ENCODE measurements at regions of chr15 and their contacts with region 1.

Region 1: DNA sequence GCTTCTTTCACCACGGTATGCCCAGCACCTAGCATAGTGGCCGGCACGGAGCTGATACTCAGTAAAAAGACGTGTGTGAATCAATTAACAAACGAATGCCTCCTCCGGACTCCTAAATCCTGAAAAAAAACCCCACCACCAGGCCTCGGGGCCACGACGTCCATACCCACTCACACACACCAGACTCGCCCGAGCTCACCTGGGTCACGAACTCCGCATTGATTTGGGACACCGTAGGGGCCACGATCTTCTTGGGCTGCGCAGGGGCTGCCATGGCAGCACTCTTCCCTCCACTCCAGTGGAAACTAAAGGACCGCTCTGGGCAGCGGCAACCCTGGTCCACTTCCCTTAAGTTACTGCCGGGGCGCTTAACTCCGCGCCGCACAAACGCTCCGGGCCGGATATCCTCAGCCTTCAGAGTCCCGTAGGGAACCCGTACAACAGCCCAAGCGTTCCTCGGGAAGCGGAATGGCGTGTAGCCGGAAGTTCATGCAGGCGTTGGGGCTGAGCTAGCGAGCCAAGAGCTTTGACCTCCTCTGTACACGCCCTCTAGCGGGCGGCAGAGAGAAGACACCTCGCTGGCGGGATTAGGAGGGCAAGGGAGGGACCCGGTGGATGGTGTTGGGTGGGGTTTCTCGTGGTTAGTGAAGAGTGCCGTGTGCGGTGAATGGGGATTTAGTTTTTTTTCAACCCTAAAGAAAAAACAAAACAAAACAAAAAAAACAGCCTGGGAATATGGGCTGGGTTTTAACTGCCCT is at the start of gene AQR:
- DNase-seq: peak; percentile 83 to 96
- ATAC-seq: peak; percentile 97 to 99 (median 97)
- H3K4me3 ChIP-seq: peak within 1 kb of the TSS; percentile 85
- H3K4me3 Mint-ChIP-seq: peak within 1 kb of the TSS; percentile 100
- H3K27ac ChIP-seq: peak within 1 kb of the TSS; percentile 66
- H3K27ac Mint-ChIP-seq: peak within 1 kb of the TSS; percentile 95 to 97
- H3K4me1 ChIP-seq: peaks cover 19% of the 10 kb centered on the region
- H3K4me1 Mint-ChIP-seq: peaks cover 47 to 49% of the 10 kb centered on the region in 2 donors
- H3K27me3 ChIP-seq: no peaks in the 10 kb centered on the region
- H3K27me3 Mint-ChIP-seq: no peaks in the 10 kb centered on the region
- CTCF ChIP-seq: peak; percentile 99
- total RNA-seq, gene AQR: 44.8 to 64.4 (median 53.0) TPM

Region 2: GRCh38 chr15:34795267-34796081 is 174.0 kb before region 1 on chr15 and contains the start of gene ACTC1:
- intact Hi-C with region 1: no loop called
- DNase-seq: no peak
- ATAC-seq: no peak
- H3K4me3 ChIP-seq: no peak within 1 kb of the TSS
- H3K4me3 Mint-ChIP-seq: no peak within 1 kb of the TSS
- H3K27ac ChIP-seq: no peak within 1 kb of the TSS
- H3K27ac Mint-ChIP-seq: no peak within 1 kb of the TSS
- H3K4me1 ChIP-seq: no peaks in the 10 kb centered on the region
- H3K4me1 Mint-ChIP-seq: no peaks in the 10 kb centered on the region
- H3K27me3 ChIP-seq: peaks cover 12% of the 10 kb centered on the region
- H3K27me3 Mint-ChIP-seq: peaks cover 38 to 82% of the 10 kb centered on the region in 2 donors
- CTCF ChIP-seq: no peak
- total RNA-seq, gene ACTC1: not detected

Region 3: DNA sequence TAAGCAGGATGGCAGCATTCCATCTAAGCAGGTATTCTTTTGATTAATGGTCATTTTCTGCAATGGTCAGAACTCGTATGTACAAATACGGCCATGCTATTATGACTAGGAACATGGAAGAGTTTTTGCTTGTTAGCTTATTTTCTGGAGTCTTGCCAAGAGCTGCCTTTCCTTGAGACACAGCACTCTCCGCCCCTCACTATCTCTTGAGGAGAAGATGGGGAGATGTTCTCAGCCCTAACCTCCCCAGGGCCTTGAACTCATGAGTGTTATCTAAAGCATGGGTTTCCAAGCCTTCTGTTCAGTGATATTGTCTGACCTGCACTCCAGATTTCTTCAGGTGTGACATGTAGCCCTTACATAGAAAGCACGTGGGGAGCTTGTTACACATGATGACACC is 108.3 kb before region 1 on chr15:
- intact Hi-C with region 1: no loop called
- DNase-seq: no peak
- ATAC-seq: no peak
- H3K4me3 ChIP-seq: no peak overlapping the region
- H3K4me3 Mint-ChIP-seq: no peak overlapping the region
- H3K27ac ChIP-seq: no peak overlapping the region
- H3K27ac Mint-ChIP-seq: no peak overlapping the region
- H3K4me1 ChIP-seq: no peaks in the 10 kb centered on the region
- H3K4me1 Mint-ChIP-seq: no peaks in the 10 kb centered on the region
- H3K27me3 ChIP-seq: no peaks in the 10 kb centered on the region
- H3K27me3 Mint-ChIP-seq: no peaks in the 10 kb centered on the region
- CTCF ChIP-seq: no peak

Region 4: GRCh38 chr15:34942363-34942762 is 27.2 kb before region 1 on chr15:
- intact Hi-C with region 1: no loop called
- DNase-seq: no peak
- ATAC-seq: no peak
- H3K4me3 ChIP-seq: no peak overlapping the region
- H3K4me3 Mint-ChIP-seq: no peak overlapping the region
- H3K27ac ChIP-seq: no peak overlapping the region
- H3K27ac Mint-ChIP-seq: no peak overlapping the region
- H3K4me1 ChIP-seq: no peaks in the 10 kb centered on the region
- H3K4me1 Mint-ChIP-seq: no peaks in the 10 kb centered on the region
- H3K27me3 ChIP-seq: no peaks in the 10 kb centered on the region
- H3K27me3 Mint-ChIP-seq: no peaks in the 10 kb centered on the region
- CTCF ChIP-seq: no peak

Region 5: DNA sequence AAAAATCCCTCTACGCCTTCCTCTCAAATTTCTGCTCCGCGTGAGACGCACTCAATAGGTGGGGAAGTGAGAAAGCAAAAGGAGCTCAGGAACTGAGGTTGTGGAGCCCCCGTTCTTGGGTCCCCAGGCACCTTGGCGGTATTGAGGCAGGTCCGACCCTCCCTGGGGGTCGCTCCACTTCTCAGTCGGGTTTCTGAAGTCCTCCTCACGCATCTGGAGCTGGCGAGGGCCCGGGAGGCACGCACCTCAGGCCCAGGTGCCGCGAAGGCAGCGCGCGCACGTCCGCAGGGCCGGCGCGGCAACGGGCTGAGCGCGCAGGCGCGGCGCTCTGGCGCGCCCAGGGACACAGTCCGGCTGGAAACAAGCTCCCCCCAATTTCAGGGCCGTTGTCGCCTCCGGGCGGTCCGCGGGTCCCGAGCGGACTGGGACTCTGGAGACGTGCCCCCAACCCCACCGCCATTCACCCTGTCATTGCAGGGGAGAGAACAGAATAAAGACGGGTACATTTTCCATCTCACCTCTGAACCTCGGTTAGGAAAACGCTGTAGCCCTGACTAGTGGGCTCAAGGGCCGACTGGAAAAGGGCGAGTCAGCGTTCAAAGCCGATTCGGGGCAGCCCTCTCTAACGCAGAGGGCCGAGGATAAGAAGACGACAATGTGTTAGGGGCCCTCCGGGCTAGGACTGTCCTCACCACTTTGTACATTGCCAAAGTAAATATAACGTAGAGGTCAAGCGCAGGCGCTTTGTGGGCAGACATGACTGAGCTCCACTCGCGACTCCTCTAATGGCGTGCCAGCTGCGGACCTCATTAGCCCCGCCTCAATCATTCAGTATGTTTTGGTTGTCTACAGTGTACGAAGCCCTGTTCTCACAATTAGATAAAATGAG is 18.7 kb after region 1 on chr15 and contains the start of gene ZNF770:
- intact Hi-C with region 1: loop called (anchors 1 kb)
- DNase-seq: peak; percentile 84 to 93
- ATAC-seq: peak; percentile 91 to 96 (median 91)
- H3K4me3 ChIP-seq: peak within 1 kb of the TSS; percentile 80
- H3K4me3 Mint-ChIP-seq: peak within 1 kb of the TSS; percentile 95
- H3K27ac ChIP-seq: peak within 1 kb of the TSS; percentile 90
- H3K27ac Mint-ChIP-seq: peak within 1 kb of the TSS; percentile 95 to 98
- H3K4me1 ChIP-seq: peaks cover 16% of the 10 kb centered on the region
- H3K4me1 Mint-ChIP-seq: peaks cover 15 to 30% of the 10 kb centered on the region in 2 donors
- H3K27me3 ChIP-seq: peaks cover 4% of the 10 kb centered on the region
- H3K27me3 Mint-ChIP-seq: peaks cover 4% of the 10 kb centered on the region in 2 donors
- CTCF ChIP-seq: no peak
- total RNA-seq, gene ZNF770: 26.4 to 35.3 (median 30.1) TPM

Measured in natural killer cell (primary cell).